CD8-positive, alpha-beta T cell (primary cell): ENCODE measurements at regions of chr22 and their contacts with region 1.

Region 1: DNA sequence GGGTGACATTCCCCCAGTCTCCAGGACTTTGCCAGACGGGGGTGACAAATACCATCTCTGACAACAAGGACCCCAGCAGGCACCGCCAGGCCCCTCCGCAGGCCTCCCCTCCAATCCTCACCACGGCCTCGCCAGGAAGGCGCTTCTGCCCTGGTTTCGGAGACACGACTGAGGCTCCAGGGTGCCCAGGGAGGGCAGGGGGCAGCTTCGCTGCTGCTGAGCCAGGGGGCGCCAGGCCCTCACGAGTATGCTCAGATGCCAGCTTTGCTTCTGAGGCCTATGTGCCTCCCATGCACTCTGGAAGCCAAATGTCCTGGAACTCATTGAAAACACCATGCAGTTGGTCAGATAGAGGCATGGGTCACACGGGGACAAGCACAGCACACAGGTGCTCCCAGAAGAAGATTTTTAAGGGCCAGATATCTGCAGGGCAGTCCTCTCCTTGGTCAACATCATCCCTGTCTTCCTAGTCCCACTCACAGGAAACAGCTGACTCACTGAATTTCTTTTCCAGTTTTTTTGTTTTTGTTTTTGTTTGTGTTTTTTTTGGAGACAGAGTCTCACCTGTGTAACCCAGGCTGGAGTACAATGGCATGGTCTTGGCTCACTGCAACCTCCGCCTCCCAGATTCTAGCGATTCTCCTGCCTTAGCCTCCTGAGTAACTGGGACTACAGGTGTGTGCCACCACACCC is 19.9 kb downstream of the BID start:
- DNase-seq: peak in 6 of 9 experiments; percentile 38 to 65 (median 50)
- ATAC-seq: peak; percentile 54
- H3K4me3 ChIP-seq: no peak overlapping the region
- H3K4me3 Mint-ChIP-seq: no peak overlapping the region
- H3K27ac ChIP-seq: no peak overlapping the region
- H3K27ac Mint-ChIP-seq: peak overlapping the region; percentile 41
- H3K4me1 ChIP-seq: no peaks in the 10 kb centered on the region
- H3K4me1 Mint-ChIP-seq: peaks cover 19% of the 10 kb centered on the region
- H3K27me3 ChIP-seq: no peaks in the 10 kb centered on the region
- H3K27me3 Mint-ChIP-seq: no peaks in the 10 kb centered on the region
- CTCF ChIP-seq: peak; percentile 33

Region 2: GRCh38 chr22:17672417-17672991 is 81.9 kb before region 1 on chr22:
- CTCF ChIA-PET with region 1: no interaction called
- POLR2A ChIA-PET with region 1: no interaction called
- intact Hi-C with region 1: no loop called
- DNase-seq: no peak
- ATAC-seq: no peak
- H3K4me3 ChIP-seq: no peak overlapping the region
- H3K4me3 Mint-ChIP-seq: no peak overlapping the region
- H3K27ac ChIP-seq: no peak overlapping the region
- H3K27ac Mint-ChIP-seq: no peak overlapping the region
- H3K4me1 ChIP-seq: no peaks in the 10 kb centered on the region
- H3K4me1 Mint-ChIP-seq: peaks cover 27% of the 10 kb centered on the region
- H3K27me3 ChIP-seq: no peaks in the 10 kb centered on the region
- H3K27me3 Mint-ChIP-seq: no peaks in the 10 kb centered on the region
- CTCF ChIP-seq: no peak

Region 3: GRCh38 chr22:17742527-17742902 is 11.9 kb before region 1 on chr22:
- CTCF ChIA-PET with region 1: interaction called, 23 read pairs
- POLR2A ChIA-PET with region 1: no interaction called
- intact Hi-C with region 1: no loop called
- DNase-seq: peak; percentile 44 to 83 (median 67)
- ATAC-seq: peak; percentile 85
- H3K4me3 ChIP-seq: no peak overlapping the region
- H3K4me3 Mint-ChIP-seq: no peak overlapping the region
- H3K27ac ChIP-seq: no peak overlapping the region
- H3K27ac Mint-ChIP-seq: no peak overlapping the region
- H3K4me1 ChIP-seq: no peaks in the 10 kb centered on the region
- H3K4me1 Mint-ChIP-seq: peaks cover 7% of the 10 kb centered on the region
- H3K27me3 ChIP-seq: no peaks in the 10 kb centered on the region
- H3K27me3 Mint-ChIP-seq: no peaks in the 10 kb centered on the region
- CTCF ChIP-seq: peak; percentile 79

Region 4: DNA sequence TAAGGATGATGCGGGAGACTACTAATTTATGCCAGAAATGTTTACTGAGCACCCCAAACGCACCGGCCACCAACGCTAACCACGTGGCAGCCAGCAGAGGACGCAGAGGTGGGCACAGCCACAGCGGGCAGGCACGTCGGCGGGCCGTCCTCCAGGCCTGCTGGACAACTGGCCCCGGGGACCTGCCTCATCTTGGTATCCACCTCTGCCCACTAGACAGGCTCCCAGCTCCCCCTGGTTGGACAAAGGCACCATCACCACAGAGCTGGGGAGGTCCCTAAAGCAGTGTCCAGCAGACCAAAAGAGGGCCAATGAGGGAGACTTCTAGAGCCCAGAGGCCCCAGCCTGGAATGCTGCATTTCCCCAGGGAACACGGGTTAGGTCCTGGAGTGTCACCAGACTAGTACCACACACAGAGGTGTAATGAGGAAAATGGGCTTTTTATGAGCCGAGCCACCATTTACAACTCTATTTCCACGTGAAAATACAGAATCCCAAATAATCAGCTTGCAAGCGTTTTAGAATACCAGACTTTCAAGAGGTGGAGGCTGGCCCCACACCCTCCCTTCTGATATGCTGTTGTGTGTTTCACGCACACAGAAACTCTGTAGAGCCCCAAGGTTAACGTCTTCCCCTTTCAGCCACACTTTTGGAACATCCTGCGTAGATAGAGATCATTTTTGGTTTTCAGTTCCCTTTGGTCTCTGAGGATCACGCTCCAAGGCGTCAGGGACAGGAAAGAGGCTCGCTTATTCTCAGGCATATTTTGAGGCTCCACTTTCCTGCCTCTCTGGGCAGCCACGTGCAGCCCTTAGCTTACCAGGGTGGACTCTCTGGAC is 43.6 kb after region 1 on chr22:
- CTCF ChIA-PET with region 1: no interaction called
- POLR2A ChIA-PET with region 1: no interaction called
- intact Hi-C with region 1: loop called in 1 of 2 experiments (anchors 1 kb)
- DNase-seq: peak in 1 of 9 experiments; percentile 34
- ATAC-seq: no peak
- H3K4me3 ChIP-seq: no peak overlapping the region
- H3K4me3 Mint-ChIP-seq: no peak overlapping the region
- H3K27ac ChIP-seq: no peak overlapping the region
- H3K27ac Mint-ChIP-seq: no peak overlapping the region
- H3K4me1 ChIP-seq: no peaks in the 10 kb centered on the region
- H3K4me1 Mint-ChIP-seq: no peaks in the 10 kb centered on the region
- H3K27me3 ChIP-seq: no peaks in the 10 kb centered on the region
- H3K27me3 Mint-ChIP-seq: no peaks in the 10 kb centered on the region
- CTCF ChIP-seq: no peak

Region 5: GRCh38 chr22:17808693-17809403 is 54.5 kb after region 1 on chr22:
- CTCF ChIA-PET with region 1: no interaction called
- POLR2A ChIA-PET with region 1: no interaction called
- intact Hi-C with region 1: no loop called
- DNase-seq: no peak
- ATAC-seq: no peak
- H3K4me3 ChIP-seq: no peak overlapping the region
- H3K4me3 Mint-ChIP-seq: no peak overlapping the region
- H3K27ac ChIP-seq: no peak overlapping the region
- H3K27ac Mint-ChIP-seq: no peak overlapping the region
- H3K4me1 ChIP-seq: no peaks in the 10 kb centered on the region
- H3K4me1 Mint-ChIP-seq: no peaks in the 10 kb centered on the region
- H3K27me3 ChIP-seq: no peaks in the 10 kb centered on the region
- H3K27me3 Mint-ChIP-seq: no peaks in the 10 kb centered on the region
- CTCF ChIP-seq: no peak